CD4-positive, alpha-beta memory T cell (primary cell): ENCODE measurements at regions of chr7 and their contacts with region 1.

Region 1: GRCh38 chr7:36440880-36441279 is 51.2 kb downstream of the ANLN start:
- DNase-seq: peak in 4 of 5 donors; percentile 1 to 24 (median 6)
- H3K4me3 ChIP-seq: no peak overlapping the region
- H3K4me3 Mint-ChIP-seq: no peak overlapping the region
- H3K27ac ChIP-seq: no peak overlapping the region
- H3K27ac Mint-ChIP-seq: no peak overlapping the region
- H3K4me1 ChIP-seq: no peaks in the 10 kb centered on the region
- H3K4me1 Mint-ChIP-seq: no peaks in the 10 kb centered on the region
- H3K27me3 ChIP-seq: no peaks in the 10 kb centered on the region
- H3K27me3 Mint-ChIP-seq: no peaks in the 10 kb centered on the region

Region 2: GRCh38 chr7:36430186-36430585 is 10.7 kb before region 1 on chr7:
- CTCF ChIA-PET with region 1: interaction called, 11 read pairs
- POLR2A ChIA-PET with region 1: interaction called, 3 read pairs
- intact Hi-C with region 1: no loop called
- DNase-seq: no peak
- H3K4me3 ChIP-seq: no peak overlapping the region
- H3K4me3 Mint-ChIP-seq: no peak overlapping the region
- H3K27ac ChIP-seq: no peak overlapping the region
- H3K27ac Mint-ChIP-seq: no peak overlapping the region
- H3K4me1 ChIP-seq: no peaks in the 10 kb centered on the region
- H3K4me1 Mint-ChIP-seq: peaks cover 0 to 3% (median 1%) of the 10 kb centered on the region in 4 donors
- H3K27me3 ChIP-seq: no peaks in the 10 kb centered on the region
- H3K27me3 Mint-ChIP-seq: no peaks in the 10 kb centered on the region

Region 3: DNA sequence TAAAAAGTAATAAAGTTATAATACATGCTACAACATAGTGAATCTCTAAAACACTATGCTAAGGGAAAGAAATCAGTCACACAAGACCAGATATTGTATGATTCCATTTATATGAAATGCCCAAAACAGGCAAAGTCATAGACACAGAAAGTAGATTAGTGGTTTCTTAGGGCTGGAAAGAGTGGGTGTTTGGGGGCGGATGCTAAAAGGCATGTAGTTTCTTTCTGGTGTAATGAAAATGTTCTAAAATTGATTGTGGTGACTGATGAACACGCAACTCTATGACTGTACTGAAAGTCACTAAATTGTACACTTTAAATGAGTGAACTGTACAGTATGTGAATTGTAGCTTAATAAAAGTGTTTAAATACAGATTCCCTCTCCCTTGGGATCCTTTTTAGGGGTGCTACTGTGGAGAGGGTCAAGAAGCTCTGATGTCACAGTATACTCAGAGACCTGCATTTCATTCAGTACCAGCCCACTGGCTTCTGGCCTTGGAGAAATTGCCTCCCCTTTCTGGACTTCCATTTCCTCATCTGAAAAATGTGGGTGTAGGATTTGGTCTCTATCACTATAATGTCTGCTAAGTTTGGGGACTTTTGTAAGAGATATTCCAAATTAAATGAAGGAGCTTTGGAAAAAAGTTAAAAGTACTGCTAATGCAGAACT is 237.0 kb after region 1 on chr7:
- CTCF ChIA-PET with region 1: interaction called, 10 read pairs
- POLR2A ChIA-PET with region 1: no interaction called
- intact Hi-C with region 1: no loop called
- DNase-seq: peak in 2 of 5 donors; percentile 10 to 11
- H3K4me3 ChIP-seq: no peak overlapping the region
- H3K4me3 Mint-ChIP-seq: peak overlapping the region in 7 of 8 donors; percentile 55 to 84 (median 68)
- H3K27ac ChIP-seq: no peak overlapping the region
- H3K27ac Mint-ChIP-seq: peak overlapping the region; percentile 79 to 96 (median 89)
- H3K4me1 ChIP-seq: peaks cover 16% of the 10 kb centered on the region
- H3K4me1 Mint-ChIP-seq: peaks cover 18 to 39% (median 28%) of the 10 kb centered on the region in 4 donors
- H3K27me3 ChIP-seq: no peaks in the 10 kb centered on the region
- H3K27me3 Mint-ChIP-seq: no peaks in the 10 kb centered on the region

Region 4: DNA sequence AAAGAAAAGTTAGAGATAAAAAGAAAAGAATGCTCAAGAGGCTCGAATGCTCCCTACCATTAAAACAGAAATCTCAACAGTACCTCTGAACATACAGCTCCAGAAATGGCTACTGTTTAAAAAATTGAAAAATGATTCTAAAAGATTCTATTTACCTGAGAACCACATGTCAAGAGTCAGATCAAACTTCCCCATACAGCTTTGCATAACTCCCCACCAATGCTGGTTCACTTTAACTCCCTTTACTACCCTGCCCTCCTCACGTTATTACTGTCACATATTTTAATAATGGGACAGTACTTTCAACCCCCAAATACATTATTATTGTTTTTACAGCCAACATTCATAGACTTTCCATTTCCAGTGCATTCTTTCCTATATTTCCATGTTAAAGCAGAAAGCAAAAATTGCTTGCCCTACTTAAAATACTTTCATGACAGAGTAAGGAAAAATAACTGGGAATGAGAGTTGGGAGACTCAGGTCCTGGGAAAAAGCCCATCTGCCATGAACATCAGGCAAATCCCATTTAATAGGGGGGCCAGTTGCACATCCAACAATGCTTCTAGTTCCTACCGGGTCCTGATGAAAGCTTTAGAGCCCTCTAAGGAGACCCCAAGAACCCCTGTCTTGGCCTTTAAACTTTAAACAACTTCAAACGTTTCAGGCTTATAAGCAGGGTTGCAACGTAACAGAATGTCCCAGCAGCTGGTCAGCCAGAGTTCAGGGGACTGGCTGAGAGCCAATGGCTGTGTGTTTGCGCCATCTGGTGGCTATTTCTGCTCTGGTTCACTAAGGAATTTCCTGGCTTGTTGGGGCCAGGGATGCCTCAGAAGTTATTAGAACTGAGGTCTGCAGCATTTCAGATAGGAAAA is 760.4 kb after region 1 on chr7:
- CTCF ChIA-PET with region 1: interaction called, 40 read pairs
- POLR2A ChIA-PET with region 1: no interaction called
- intact Hi-C with region 1: loop called (anchors 1 kb)
- DNase-seq: peak in 4 of 5 donors; percentile 10 to 28 (median 25)
- H3K4me3 ChIP-seq: no peak overlapping the region
- H3K4me3 Mint-ChIP-seq: no peak overlapping the region
- H3K27ac ChIP-seq: no peak overlapping the region
- H3K27ac Mint-ChIP-seq: peak overlapping the region in 3 of 7 donors; percentile 5 to 59 (median 22)
- H3K4me1 ChIP-seq: no peaks in the 10 kb centered on the region
- H3K4me1 Mint-ChIP-seq: peaks cover 4 to 12% (median 7%) of the 10 kb centered on the region in 4 donors
- H3K27me3 ChIP-seq: no peaks in the 10 kb centered on the region
- H3K27me3 Mint-ChIP-seq: no peaks in the 10 kb centered on the region